CD8-positive, alpha-beta T cell (primary cell): ENCODE measurements at regions of chr4 and their contacts with region 1.

Region 1: GRCh38 chr4:143320113-143320512 is 16.6 kb upstream of the GAB1 start:
- DNase-seq: no peak
- ATAC-seq: no peak
- H3K4me3 ChIP-seq: no peak overlapping the region
- H3K4me3 Mint-ChIP-seq: no peak overlapping the region
- H3K27ac ChIP-seq: no peak overlapping the region
- H3K27ac Mint-ChIP-seq: no peak overlapping the region
- H3K4me1 ChIP-seq: no peaks in the 10 kb centered on the region
- H3K4me1 Mint-ChIP-seq: no peaks in the 10 kb centered on the region
- H3K27me3 ChIP-seq: no peaks in the 10 kb centered on the region
- H3K27me3 Mint-ChIP-seq: peaks cover 4% of the 10 kb centered on the region
- CTCF ChIP-seq: no peak

Region 2: DNA sequence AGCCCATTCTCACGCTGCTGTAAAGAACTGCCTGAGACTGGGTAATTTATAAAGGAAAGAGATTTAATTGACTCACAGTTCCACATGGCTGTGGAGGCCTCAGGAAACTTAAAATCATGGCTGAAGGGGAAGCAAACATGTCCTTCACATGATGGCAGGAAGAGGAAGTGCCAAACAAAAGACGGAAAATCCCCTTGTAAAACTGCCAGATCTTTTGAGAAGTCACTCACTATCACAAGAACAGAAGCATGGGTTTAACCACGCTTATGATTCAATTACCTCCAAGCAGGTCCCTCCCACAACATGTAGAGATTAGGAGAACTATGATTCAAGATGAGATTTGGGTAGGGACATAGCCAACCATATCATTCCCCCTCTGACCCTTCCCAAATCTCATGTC is 1348.2 kb before region 1 on chr4:
- CTCF ChIA-PET with region 1: no interaction called
- POLR2A ChIA-PET with region 1: no interaction called
- intact Hi-C with region 1: loop called in 1 of 2 experiments (anchors 5 kb)
- DNase-seq: no peak
- ATAC-seq: no peak
- H3K4me3 ChIP-seq: no peak overlapping the region
- H3K4me3 Mint-ChIP-seq: no peak overlapping the region
- H3K27ac ChIP-seq: no peak overlapping the region
- H3K27ac Mint-ChIP-seq: no peak overlapping the region
- H3K4me1 ChIP-seq: no peaks in the 10 kb centered on the region
- H3K4me1 Mint-ChIP-seq: no peaks in the 10 kb centered on the region
- H3K27me3 ChIP-seq: no peaks in the 10 kb centered on the region
- H3K27me3 Mint-ChIP-seq: no peaks in the 10 kb centered on the region
- CTCF ChIP-seq: no peak